ENCODE measurements at regions of chr9 and their contacts with region 1.

Region 1: DNA sequence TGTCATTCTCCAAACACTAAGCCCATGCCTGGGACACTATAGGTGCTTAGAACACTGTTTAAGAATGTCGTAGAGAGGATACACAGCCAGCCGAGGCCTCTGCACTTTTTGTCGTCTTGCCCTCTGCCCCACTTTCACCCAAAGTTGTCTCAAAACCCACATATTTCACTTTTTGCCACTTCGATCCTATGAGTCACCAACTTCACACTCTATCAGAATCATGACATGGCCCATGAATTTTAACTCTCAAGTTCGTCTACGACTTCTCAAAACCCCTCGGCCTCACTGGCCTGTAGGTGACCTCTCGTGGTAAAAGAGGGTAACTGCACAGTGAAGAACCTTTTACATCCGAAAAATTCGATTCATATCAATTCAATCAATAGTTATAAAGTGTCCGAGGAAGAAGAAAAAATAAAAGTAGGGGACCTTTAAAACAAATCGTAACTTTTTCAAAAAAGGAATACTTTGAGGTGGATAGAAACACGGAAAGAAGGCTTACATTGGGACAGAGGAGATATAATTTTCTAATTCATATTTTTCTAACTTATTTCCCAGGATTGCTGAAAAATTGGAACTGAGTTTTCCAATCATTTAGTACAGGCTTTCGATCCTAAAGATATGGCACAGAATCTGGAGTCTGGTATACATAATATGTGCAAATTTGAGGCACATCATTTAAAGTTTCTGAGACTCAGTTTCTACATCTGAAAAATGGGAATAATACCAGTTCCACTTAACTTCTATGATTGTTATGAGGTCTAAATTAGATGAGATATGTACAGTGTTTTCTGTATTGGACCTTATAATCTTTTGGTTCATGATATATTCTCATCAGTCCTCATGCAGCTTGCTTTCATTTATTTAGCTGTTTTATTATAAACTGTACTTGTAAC is 122.6 kb downstream of the APBA1 start:
- DNase-seq: no peak
- H3K4me3 ChIP-seq: no peak overlapping the region
- H3K27ac ChIP-seq: no peak overlapping the region
- H3K4me1 ChIP-seq: no peaks in the 10 kb centered on the region
- H3K27me3 ChIP-seq: no peaks in the 10 kb centered on the region
- CTCF ChIP-seq: peak; percentile 44 to 64 (median 54)
- POLR2A ChIP-seq: no peak

Region 2: DNA sequence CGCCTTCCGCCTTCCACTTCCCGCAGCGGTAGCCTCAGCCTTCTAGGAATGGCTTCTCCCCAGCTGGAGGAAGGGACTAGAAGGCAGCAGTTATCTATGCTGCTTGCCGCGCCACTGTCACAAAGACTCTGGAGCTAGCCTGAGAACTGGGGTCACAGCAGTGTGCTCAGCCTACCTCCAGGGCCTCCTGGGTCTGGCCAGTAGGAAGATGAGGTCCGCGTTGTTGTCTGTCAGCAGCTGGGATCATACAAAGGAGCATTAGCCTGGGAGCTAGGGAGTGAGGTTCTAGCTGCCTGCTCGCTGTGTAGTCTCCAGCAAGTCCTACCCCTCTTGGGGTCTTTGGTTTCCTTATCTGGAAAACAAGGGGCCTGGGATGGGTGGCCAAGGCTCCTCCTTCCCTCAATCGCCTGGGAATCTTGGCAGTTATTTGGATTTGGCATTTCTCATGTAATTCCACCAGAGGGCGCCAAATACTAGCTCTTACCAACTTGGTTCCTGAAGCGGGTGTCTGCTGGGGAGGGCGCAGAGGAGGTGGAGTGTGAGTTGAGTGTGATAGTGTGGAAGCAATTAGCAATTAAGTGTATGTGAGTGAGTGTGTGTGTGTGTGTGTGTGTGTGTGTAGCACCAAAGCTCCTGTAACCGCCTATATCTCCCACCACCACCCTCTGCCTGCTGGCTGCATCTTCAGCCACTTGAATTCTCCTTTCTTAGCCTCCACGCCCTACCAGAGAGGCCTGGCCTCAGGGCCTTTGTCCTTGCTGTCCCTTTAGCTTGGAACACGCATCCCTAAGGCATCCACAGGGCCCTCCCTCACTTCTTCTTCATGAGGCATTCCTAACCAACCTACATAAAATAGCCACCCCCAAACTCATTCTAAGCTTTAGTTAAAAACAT is 127.4 kb before region 1 on chr9:
- intact Hi-C with region 1: loop called (anchors 5 kb)
- DNase-seq: no peak
- H3K4me3 ChIP-seq: no peak overlapping the region
- H3K27ac ChIP-seq: no peak overlapping the region
- H3K4me1 ChIP-seq: no peaks in the 10 kb centered on the region
- H3K27me3 ChIP-seq: no peaks in the 10 kb centered on the region
- CTCF ChIP-seq: peak; percentile 73 to 83 (median 82)
- POLR2A ChIP-seq: no peak

Region 3: DNA sequence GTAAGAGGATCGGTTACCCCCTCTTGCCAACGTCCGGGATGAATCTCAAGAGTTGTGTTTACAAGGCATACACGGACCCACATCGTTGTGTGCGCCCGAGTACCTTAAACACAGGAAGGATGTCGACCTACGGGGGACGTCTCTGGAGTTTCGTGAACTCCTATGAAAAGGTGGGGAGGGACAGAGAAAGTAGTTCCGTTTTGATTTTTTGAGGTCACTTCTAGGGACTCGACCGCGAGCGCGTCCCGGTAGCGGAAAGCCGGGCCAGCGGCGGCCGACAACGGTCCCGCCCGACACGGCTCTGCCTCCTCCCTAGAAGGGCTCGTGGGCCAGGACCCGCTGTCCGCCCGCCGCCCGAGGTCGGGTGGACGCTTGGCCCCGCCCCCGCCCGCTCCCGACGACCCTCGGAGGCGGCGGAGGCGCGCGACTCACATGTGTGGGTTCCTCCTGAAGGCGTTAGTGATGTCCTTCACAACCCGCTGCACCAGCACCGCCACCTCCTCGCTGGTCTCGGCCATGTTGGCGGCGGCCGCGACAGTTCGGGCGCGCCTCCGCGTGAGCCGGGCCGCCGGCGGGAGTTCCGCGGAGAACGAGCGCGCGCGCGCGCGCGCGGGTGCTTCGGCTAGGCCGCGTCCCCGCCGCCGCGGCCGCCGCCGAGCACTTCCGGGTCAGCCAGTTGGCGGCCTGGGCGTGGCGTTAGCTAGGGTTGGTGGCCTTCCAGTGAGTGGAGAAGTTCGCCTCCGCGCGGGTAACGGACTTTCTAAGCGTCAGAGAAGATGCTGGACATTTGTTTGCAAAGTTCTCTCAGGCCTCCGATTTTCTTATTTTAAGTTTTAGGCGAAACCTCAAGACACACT is 210.1 kb after region 1 on chr9 and contains the start of gene PTAR1:
- intact Hi-C with region 1: no loop called
- DNase-seq: peak in 1 of 2 donors; percentile 89
- H3K4me3 ChIP-seq: peak within 1 kb of the TSS; percentile 79 to 98
- H3K27ac ChIP-seq: peak within 1 kb of the TSS; percentile 96
- H3K4me1 ChIP-seq: peaks cover 39% of the 10 kb centered on the region
- H3K27me3 ChIP-seq: no peaks in the 10 kb centered on the region
- CTCF ChIP-seq: no peak
- POLR2A ChIP-seq: peak in 1 of 2 donors; percentile 59
- total RNA-seq, gene PTAR1: 56.5 TPM